ENCODE measurements at regions of chr1 and their contacts with region 1.

Region 1: DNA sequence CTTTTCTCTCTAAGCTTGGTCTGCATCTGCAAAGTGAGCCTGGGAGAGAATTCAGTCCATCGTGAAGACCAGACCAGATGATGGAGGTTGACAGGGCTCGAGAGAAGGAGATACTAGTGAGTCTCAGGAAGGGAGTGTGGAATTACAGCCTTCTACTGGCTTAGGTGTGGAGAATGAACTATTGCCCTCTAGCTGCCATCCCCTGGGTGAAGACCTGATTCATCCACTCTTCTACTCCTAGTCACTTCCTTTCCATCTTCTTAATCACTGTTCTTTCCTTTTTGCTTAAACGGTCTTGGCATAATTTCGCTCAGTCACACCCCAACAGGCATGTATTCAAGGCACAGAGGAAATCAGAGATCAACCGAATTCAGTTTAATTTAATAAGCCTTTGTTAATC is 34.0 kb upstream of the HSD17B7 start:
- DNase-seq: no peak
- H3K4me3 ChIP-seq: no peak overlapping the region
- H3K27ac ChIP-seq: no peak overlapping the region
- H3K4me1 ChIP-seq: no peaks in the 10 kb centered on the region
- H3K27me3 ChIP-seq: no peaks in the 10 kb centered on the region
- CTCF ChIP-seq: peak; percentile 16

Region 2: DNA sequence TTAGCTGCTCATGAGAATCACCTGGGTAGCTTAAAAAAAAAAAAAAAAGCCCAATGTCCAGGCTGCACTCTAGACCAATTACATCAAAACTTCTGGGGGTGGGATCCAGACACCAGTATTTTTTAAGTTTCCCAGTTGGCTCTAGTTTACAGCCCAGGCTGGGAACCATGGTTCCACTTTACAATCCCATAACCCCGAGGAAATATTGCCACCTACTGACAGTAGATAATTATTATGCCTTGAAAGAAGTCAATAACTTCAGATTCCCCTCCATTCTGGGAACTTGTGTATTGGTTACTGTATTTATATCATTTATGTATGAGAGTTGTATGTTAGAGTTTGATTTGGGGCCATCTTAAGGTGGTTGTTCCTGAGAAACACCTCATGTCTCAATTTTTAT is 480.0 kb before region 1 on chr1:
- intact Hi-C with region 1: no loop called
- DNase-seq: no peak
- H3K4me3 ChIP-seq: no peak overlapping the region
- H3K27ac ChIP-seq: no peak overlapping the region
- H3K4me1 ChIP-seq: peaks cover 10% of the 10 kb centered on the region
- H3K27me3 ChIP-seq: no peaks in the 10 kb centered on the region
- CTCF ChIP-seq: peak; percentile 51

Region 3: GRCh38 chr1:162612606-162613400 is 143.7 kb before region 1 on chr1:
- intact Hi-C with region 1: loop called (anchors 10 kb)
- DNase-seq: peak; percentile 29
- H3K4me3 ChIP-seq: no peak overlapping the region
- H3K27ac ChIP-seq: peak overlapping the region; percentile 48
- H3K4me1 ChIP-seq: peaks cover 16% of the 10 kb centered on the region
- H3K27me3 ChIP-seq: no peaks in the 10 kb centered on the region
- CTCF ChIP-seq: no peak

Region 4: DNA sequence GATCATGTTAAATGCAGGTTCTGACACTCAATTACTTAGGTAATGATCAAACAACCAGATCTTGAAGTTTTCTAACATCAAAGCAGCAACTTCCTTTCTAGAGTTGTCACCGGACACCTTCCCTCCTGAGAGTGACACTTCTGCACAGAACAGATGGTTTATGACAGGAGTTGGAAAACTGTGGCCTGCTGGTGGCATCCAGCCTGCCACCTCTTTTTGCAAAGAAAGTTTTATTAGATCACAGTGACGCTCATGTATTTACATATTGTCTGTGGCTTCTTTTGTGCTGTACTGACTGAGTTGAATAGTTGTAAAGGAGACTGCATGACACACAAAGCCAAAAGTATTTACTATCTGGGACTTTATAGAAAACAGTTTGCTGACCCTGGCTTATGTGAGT is 95.9 kb before region 1 on chr1:
- intact Hi-C with region 1: no loop called
- DNase-seq: no peak
- H3K4me3 ChIP-seq: no peak overlapping the region
- H3K27ac ChIP-seq: no peak overlapping the region
- H3K4me1 ChIP-seq: peaks cover 26% of the 10 kb centered on the region
- H3K27me3 ChIP-seq: no peaks in the 10 kb centered on the region
- CTCF ChIP-seq: no peak

Region 5: GRCh38 chr1:162670928-162671663 is 85.4 kb before region 1 on chr1:
- intact Hi-C with region 1: no loop called
- DNase-seq: no peak
- H3K4me3 ChIP-seq: no peak overlapping the region
- H3K27ac ChIP-seq: peak overlapping the region; percentile 64
- H3K4me1 ChIP-seq: peaks cover 42% of the 10 kb centered on the region
- H3K27me3 ChIP-seq: no peaks in the 10 kb centered on the region
- CTCF ChIP-seq: no peak

Region 6: DNA sequence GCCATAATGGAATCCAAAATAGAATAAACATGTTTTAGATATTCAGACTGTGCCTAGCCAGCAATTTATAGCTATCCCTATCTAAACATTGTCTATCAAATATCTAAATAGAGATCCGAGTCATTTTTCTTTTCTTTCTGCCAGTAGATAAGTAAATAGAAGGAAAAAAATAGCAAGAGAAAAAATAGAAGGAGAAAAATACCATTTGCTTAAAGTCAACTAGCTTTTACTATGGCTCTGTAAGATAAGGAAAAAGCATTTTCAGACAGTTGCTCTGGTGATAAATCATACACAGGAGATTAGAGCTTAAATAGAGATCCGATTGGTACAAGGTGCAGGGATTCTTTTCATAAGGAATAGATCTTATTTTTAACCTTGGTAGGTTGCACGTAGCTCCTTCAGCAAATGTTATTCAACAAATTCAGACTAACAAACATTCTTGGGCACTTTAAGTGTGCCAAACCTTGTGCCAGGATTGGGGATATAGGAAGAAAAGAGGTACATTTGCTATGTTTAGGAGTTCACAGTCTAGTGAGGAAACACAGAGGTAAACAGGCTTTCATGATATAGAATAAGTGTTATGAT is 174.5 kb after region 1 on chr1:
- intact Hi-C with region 1: no loop called
- DNase-seq: no peak
- H3K4me3 ChIP-seq: no peak overlapping the region
- H3K27ac ChIP-seq: no peak overlapping the region
- H3K4me1 ChIP-seq: no peaks in the 10 kb centered on the region
- H3K27me3 ChIP-seq: peaks cover 5% of the 10 kb centered on the region
- CTCF ChIP-seq: no peak

Measured in left ventricle myocardium inferior (tissue), 1 donor.